Dendritic cell treated with granulocyte-macrophage colony-stimulating factor and Interleukin-4, amounts not matched to agents 40 ng/mL and 50 ng/mL, for 4 days (primary cell): ENCODE measurements at regions of chr1 and their contacts with region 1.

Region 1: GRCh38 chr1:51296383-51297357 is 33.7 kb downstream of the TTC39A start:
- H3K4me3 Mint-ChIP-seq: peak overlapping the region; percentile 70
- H3K27ac Mint-ChIP-seq: peak overlapping the region; percentile 3
- H3K4me1 Mint-ChIP-seq: peaks cover 32% of the 10 kb centered on the region
- H3K27me3 Mint-ChIP-seq: peaks cover 14% of the 10 kb centered on the region

Region 2: DNA sequence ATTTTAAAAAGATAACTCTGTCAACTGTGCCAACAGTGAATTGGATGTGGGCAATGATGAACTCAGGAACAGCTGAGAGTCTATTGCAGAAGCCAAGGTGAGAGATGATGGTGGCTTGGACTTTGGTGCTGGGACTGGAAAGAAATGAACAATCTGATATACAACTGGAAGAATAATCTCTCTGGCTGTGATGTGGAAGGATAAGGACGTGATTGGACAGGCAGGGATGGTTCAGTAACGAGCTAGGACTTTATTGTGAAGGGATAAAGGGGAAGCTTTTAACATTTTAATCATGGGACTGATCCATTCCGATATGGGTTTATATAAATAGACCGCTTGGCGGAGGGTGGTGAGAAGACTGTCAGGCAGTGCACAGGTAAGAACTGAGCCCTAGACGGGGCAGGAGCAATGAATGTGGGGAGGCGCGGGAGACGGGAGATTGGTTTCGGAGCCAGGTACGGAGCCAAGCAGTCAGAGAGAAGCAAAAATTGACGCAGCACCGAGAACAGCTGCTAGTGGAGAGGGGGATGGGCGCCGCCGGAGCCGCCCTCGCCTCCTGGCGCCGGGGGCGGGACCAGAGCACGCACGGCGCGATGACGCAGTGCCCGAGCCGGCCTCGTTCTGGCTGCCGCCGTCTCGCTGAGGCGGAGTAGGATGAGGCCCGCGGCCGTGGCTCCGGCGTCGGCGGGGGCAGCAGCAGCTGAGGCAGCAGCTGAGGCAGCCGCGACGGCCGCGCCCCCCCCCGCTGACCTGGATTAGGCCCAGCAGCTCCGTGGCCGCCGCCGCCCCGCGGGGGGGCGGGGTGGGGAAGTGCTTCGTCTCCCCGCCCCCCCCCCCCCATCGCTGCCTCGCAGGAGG is 60.8 kb before region 1 on chr1 and contains the start of gene RNF11:
- intact Hi-C with region 1: loop called (anchors 2 kb)
- H3K4me3 Mint-ChIP-seq: peak within 1 kb of the TSS; percentile 91
- H3K27ac Mint-ChIP-seq: peak within 1 kb of the TSS; percentile 94
- H3K4me1 Mint-ChIP-seq: peaks cover 39% of the 10 kb centered on the region
- H3K27me3 Mint-ChIP-seq: no peaks in the 10 kb centered on the region

Region 3: GRCh38 chr1:51445351-51446090 is 148.9 kb after region 1 on chr1:
- intact Hi-C with region 1: no loop called
- H3K4me3 Mint-ChIP-seq: no peak overlapping the region
- H3K27ac Mint-ChIP-seq: no peak overlapping the region
- H3K4me1 Mint-ChIP-seq: peaks cover 20% of the 10 kb centered on the region
- H3K27me3 Mint-ChIP-seq: no peaks in the 10 kb centered on the region